ENCODE measurements at regions of chr20 and their contacts with region 1.

Region 1: DNA sequence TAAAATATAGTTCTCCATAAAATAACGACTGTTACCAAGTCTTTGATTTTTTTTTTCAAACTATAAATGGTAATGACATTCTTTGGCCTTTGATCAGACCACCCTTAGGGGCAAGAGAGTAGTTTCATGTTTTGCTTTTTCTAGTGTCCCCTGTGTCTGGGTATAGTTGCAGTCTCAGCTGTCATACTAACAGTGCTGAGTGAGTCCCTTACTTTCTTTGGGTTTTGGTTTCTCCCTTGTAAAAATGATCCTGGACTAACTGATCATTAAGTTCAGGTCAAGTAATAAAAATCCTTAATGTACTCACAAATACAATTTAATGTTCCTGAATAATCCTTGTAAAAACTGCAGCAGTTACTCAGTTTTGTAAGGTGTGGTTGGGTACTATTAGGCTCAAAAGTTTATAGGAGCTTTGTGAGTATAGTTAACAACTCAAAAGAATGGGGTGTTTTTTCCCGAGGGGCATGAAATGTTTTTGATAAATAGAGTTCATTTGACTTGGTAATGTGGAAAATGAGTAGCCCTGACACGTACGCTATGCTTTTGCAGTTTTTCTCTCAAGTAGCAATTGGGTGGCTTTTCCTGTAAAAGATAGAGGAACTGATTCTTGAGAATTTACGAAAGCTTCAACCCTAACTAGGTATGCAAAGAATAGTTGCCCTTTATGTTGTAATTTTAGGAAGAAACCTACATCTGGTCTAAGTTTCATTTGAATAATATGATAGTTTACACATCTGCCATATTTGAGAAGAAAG is 6.2 kb downstream of the PTPN1 start:
- DNase-seq: no peak
- H3K4me3 Mint-ChIP-seq: peak overlapping the region; percentile 67
- H3K27ac Mint-ChIP-seq: peak overlapping the region; percentile 98
- H3K4me1 Mint-ChIP-seq: peaks cover 88% of the 10 kb centered on the region
- H3K27me3 Mint-ChIP-seq: no peaks in the 10 kb centered on the region

Region 2: DNA sequence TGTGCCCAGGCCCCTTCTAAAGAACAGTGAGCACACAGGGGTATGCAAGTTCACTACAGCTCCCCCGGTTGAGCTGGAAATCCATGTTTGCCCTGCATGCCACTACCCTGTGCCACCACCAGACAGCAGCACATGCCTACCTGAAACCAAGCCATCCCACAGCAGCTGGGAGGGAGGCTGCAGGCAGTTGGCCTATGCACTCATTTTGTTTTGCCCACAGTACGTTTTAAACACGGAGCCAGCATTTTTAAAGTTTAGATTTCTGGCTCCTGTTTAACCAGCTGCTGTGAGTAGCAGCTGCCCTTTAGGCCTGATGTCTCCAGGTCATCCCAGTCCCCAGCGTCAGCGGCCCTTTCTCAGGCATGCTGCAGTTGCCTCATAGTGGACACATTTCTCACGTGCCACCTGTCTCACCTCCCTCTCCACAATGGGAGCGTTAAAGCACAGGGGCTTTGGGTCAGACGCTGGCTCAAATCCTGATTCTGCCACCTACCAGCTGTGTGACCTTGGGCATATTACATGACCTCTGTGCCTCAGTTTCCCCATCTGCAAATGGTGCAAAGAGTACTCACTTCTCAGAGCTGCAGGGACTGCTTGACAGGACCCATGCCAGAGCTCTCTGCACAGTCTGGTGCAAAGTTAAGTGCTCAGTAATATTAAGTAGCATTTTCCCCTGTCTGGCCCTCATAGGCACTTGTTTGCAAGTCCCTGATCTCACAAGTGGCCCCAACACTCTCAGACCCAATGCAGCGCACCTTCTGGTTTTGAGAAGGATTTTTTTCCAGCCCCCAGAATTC is 395.3 kb before region 1 on chr20:
- CTCF ChIA-PET with region 1: no interaction called
- POLR2A ChIA-PET with region 1: no interaction called
- intact Hi-C with region 1: no loop called
- DNase-seq: peak; percentile 76
- H3K4me3 Mint-ChIP-seq: no peak overlapping the region
- H3K27ac Mint-ChIP-seq: no peak overlapping the region
- H3K4me1 Mint-ChIP-seq: peaks cover 8% of the 10 kb centered on the region
- H3K27me3 Mint-ChIP-seq: no peaks in the 10 kb centered on the region

Region 3: GRCh38 chr20:50491926-50492634 is 24.3 kb before region 1 on chr20:
- CTCF ChIA-PET with region 1: interaction called, 7 read pairs
- POLR2A ChIA-PET with region 1: interaction called, 9 read pairs
- intact Hi-C with region 1: loop called (anchors 1 kb)
- DNase-seq: no peak
- H3K4me3 Mint-ChIP-seq: no peak overlapping the region
- H3K27ac Mint-ChIP-seq: peak overlapping the region; percentile 88
- H3K4me1 Mint-ChIP-seq: peaks cover 38% of the 10 kb centered on the region
- H3K27me3 Mint-ChIP-seq: no peaks in the 10 kb centered on the region

Region 4: GRCh38 chr20:50546729-50547314 is 30.5 kb after region 1 on chr20:
- CTCF ChIA-PET with region 1: interaction called, 30 read pairs
- POLR2A ChIA-PET with region 1: interaction called, 14 read pairs
- intact Hi-C with region 1: loop called (anchors 1 kb)
- DNase-seq: peak; percentile 53
- H3K4me3 Mint-ChIP-seq: peak overlapping the region; percentile 73
- H3K27ac Mint-ChIP-seq: peak overlapping the region; percentile 80
- H3K4me1 Mint-ChIP-seq: peaks cover 67% of the 10 kb centered on the region
- H3K27me3 Mint-ChIP-seq: no peaks in the 10 kb centered on the region

Region 5: DNA sequence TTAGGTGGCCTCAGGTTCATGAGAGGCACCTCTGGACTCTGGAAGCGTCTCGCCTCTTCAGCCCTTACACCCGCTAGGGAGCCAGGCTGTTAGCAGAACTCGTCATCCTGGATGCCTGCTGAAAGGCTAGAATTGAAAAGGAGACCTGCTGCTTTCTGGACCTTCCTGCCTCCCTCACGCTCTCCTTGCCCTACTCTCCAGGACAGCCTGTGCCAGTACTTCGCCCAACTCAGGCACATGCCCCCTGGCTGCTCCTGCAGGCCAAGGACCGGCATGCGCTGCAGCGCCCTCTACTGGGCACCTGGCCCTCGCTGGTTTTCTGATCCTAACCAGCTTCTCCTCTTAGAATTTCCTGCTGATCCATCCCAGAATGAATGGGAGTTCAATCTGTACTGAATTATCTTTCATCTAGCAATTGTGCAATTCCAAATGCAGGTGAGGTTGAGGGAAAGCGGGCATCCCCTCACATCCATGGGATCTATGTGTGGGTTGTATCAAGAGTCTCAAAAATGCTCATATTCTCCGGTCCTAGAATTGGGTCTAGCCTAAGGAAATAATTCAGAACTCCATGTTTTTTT is 71.8 kb after region 1 on chr20:
- CTCF ChIA-PET with region 1: interaction called, 11 read pairs
- POLR2A ChIA-PET with region 1: no interaction called
- intact Hi-C with region 1: no loop called
- DNase-seq: peak; percentile 84
- H3K4me3 Mint-ChIP-seq: no peak overlapping the region
- H3K27ac Mint-ChIP-seq: no peak overlapping the region
- H3K4me1 Mint-ChIP-seq: peaks cover 3% of the 10 kb centered on the region
- H3K27me3 Mint-ChIP-seq: no peaks in the 10 kb centered on the region

Region 6: DNA sequence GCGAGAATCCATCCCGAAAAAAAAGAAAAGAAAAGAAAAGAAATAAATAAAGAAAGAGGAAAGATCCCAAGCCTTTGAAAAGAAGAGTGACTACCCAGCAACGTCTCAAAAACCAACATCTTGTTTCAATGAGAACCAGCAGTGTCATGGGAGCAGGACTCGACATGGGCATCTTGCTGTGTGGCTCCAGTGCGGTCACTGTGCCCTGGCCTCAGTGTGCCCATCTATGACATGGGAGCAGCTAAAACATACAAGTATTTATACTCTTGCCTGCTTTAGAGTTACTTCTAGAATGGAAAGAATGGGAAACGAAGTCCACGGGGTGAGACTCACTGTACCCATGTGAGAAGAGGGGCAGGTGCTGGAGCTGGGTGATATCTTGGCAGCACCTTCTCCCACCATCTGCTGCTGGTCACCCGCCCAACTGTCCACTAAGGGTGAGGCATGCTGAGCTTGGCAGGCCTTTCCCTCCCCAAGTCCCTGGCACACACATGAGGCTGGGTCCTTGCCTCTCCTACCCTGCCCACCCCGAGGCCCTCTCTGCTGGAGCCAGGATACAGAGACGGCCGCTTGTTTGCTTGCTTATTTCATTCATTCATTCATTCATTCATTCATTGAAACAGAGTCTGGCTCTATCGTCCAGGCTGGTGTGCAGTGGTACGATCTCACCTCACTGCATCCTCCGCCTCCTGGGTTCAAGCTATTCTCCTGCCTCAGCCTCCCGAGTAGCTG is 97.2 kb after region 1 on chr20:
- CTCF ChIA-PET with region 1: no interaction called
- POLR2A ChIA-PET with region 1: no interaction called
- intact Hi-C with region 1: no loop called
- DNase-seq: no peak
- H3K4me3 Mint-ChIP-seq: no peak overlapping the region
- H3K27ac Mint-ChIP-seq: no peak overlapping the region
- H3K4me1 Mint-ChIP-seq: no peaks in the 10 kb centered on the region
- H3K27me3 Mint-ChIP-seq: peaks cover 5% of the 10 kb centered on the region

Region 7: DNA sequence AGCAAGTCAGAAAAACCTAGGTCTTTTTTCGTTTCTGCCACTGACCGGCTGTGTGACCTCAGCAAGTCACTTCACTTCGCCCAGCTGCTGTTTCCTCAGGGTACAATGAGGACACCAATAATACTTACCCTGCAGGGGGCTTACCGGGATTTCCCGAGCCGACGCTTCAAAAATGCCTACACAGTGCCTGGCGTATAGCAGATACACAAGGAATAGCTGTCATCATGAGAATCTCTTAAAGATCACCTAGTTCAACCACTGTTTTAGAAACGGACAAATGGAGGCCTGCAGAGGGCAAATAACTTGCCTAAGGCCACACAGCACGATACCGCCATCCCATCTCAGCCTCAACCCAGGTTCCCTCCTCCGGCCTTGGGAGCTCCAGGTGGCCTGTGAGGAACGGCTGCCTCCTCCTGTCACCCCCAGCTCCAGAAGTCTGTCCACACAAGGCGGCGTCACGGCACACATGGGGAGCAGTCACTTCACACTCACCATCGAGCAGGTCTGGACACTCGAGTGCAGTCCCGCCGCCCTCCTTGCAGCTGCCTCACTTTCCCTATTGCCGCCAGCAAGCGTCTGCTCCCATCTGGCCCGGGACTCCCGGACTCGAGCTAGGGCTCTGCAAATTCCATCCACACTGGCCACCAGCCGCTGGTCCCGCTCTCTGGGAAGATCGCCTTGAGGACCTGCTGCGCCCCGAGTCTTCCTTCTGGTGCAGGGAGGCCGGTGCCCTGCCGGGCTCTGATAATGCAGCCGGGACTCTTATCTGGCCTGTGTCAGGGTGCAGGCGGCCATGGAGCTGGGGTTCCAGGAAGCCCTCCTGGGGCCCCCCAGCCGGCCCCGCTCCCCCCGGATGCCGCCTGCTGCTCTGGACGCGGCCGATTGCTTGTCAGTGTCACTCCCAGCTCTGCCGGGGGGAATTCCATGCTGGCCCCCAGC is 174.5 kb after region 1 on chr20 and contains the start of gene RIPOR3:
- CTCF ChIA-PET with region 1: no interaction called
- POLR2A ChIA-PET with region 1: no interaction called
- intact Hi-C with region 1: no loop called
- DNase-seq: no peak
- H3K4me3 Mint-ChIP-seq: no peak within 1 kb of the TSS
- H3K27ac Mint-ChIP-seq: no peak within 1 kb of the TSS
- H3K4me1 Mint-ChIP-seq: peaks cover 9% of the 10 kb centered on the region
- H3K27me3 Mint-ChIP-seq: peaks cover 35% of the 10 kb centered on the region
- total RNA-seq, gene RIPOR3: not detected